Activated naive CD4-positive, alpha-beta T cell treated with anti-CD3 and anti-CD28 coated beads for 36 hours (primary cell): ENCODE measurements at regions of chr10 and their contacts with region 1.

Region 1: GRCh38 chr10:26860443-26861204 is at the start of gene ABI1:
- DNase-seq: peak; percentile 98
- H3K4me3 Mint-ChIP-seq: peak within 1 kb of the TSS; percentile 98
- H3K27ac Mint-ChIP-seq: peak within 1 kb of the TSS; percentile 99
- H3K4me1 Mint-ChIP-seq: peaks cover 30% of the 10 kb centered on the region
- H3K27me3 Mint-ChIP-seq: no peaks in the 10 kb centered on the region
- total RNA-seq, gene ABI1: 34.5 to 37.2 TPM

Region 2: DNA sequence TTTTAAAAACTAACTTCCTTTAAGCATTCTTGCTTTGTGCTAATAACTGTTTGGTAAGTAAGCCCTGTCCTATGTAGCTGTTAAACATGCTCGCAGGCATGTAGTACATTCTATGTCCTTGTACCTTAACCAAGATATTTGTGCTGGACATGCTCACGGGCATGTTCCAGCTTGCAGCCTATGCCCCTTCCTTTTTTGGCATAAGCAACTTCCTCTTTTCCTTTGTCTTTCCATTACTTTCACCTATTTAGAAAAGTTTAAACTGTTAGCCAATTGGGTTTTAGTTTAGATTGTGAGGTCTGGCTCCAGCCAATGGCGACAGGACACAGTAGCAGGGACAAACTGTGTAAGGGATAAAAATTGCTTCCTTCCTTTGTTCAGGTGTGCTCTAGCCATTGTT is 436.9 kb before region 1 on chr10:
- CTCF ChIA-PET with region 1: no interaction called
- intact Hi-C with region 1: no loop called
- DNase-seq: no peak
- H3K4me3 Mint-ChIP-seq: no peak overlapping the region
- H3K27ac Mint-ChIP-seq: no peak overlapping the region
- H3K4me1 Mint-ChIP-seq: no peaks in the 10 kb centered on the region
- H3K27me3 Mint-ChIP-seq: no peaks in the 10 kb centered on the region

Region 3: GRCh38 chr10:26437637-26438461 is 422.8 kb before region 1 on chr10 and contains the start of gene APBB1IP:
- CTCF ChIA-PET with region 1: no interaction called
- intact Hi-C with region 1: loop called (anchors 2 kb)
- DNase-seq: peak; percentile 58
- H3K4me3 Mint-ChIP-seq: peak within 1 kb of the TSS; percentile 81
- H3K27ac Mint-ChIP-seq: peak within 1 kb of the TSS; percentile 98
- H3K4me1 Mint-ChIP-seq: peaks cover 50% of the 10 kb centered on the region
- H3K27me3 Mint-ChIP-seq: no peaks in the 10 kb centered on the region
- total RNA-seq, gene APBB1IP: 29.4 to 30.9 TPM

Region 4: DNA sequence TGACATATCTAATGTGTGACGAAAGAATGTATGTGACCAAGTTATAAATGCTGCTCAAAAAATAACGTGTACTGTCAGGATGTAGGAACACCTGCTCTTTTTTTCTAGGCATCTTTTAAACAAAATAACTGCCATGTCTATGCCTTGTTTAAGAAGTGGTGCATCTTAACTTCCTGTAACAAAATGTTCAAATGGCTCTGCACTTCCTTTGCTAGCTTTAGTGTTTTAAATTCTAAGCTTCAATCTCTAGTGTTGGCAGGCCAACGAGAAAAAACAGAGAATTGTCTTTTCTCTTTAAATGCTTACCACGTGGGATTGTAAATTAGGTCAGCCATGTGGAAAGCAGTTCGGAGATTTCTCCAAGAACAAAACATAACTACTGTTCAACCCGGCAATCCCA is 177.7 kb before region 1 on chr10:
- CTCF ChIA-PET with region 1: no interaction called
- intact Hi-C with region 1: loop called (anchors 5 kb)
- DNase-seq: no peak
- H3K4me3 Mint-ChIP-seq: no peak overlapping the region
- H3K27ac Mint-ChIP-seq: peak overlapping the region; percentile 56
- H3K4me1 Mint-ChIP-seq: peaks cover 23% of the 10 kb centered on the region
- H3K27me3 Mint-ChIP-seq: no peaks in the 10 kb centered on the region

Region 5: DNA sequence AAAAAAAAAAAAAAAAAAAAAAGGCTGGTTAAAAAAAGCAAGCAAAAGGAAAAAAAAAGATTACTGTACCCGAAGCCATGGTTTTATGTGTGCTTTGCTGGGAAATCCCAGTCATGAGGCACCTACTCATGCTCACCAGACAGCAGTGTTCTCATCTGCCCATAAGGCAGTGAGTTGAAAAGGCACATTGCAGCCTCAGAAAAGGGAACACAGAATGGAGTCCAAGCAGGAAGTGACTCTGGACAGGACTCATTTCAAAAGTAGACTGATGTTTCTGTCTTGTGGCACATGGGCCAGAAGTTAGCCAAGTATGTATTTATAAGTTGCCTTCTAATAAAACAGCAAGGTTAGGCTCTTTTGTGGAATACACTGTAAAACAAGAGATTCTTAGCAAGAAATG is 122.9 kb before region 1 on chr10:
- CTCF ChIA-PET with region 1: interaction called, 3 read pairs
- intact Hi-C with region 1: loop called (anchors 1 kb)
- DNase-seq: peak; percentile 75
- H3K4me3 Mint-ChIP-seq: no peak overlapping the region
- H3K27ac Mint-ChIP-seq: peak overlapping the region; percentile 88
- H3K4me1 Mint-ChIP-seq: peaks cover 36% of the 10 kb centered on the region
- H3K27me3 Mint-ChIP-seq: no peaks in the 10 kb centered on the region

Region 6: DNA sequence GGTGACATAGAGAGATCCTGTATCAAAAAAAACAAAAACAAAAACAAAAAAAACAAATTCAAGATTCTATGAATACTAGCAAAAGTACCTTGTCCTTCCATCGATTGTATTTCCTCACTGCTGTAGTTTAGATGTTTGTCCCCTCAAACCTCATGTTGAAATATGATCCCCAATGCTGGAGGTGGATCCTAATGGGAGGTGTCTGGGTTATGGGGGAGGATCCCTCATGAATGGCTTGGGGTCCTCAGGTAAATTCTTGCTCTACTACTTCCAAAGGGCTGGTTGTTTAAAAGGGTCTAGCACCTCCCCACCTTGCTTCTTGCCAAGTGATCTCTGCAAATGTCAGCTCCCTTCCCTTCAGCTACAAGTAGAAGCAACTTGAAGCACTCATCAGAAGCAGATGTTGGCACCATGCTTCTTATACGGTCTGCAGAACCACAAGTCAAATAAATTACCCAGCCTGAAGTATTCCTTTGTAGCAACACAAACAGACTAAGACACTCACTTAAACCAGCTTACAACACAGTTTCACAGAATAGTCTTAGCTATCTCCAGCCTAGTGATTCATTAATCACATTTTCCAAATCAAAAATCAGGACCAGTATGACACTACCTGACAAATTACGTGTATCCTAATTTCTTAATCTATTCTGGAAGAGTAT is 20.5 kb before region 1 on chr10:
- CTCF ChIA-PET with region 1: interaction called, 3 read pairs
- intact Hi-C with region 1: loop called (anchors 1 kb)
- DNase-seq: no peak
- H3K4me3 Mint-ChIP-seq: no peak overlapping the region
- H3K27ac Mint-ChIP-seq: no peak overlapping the region
- H3K4me1 Mint-ChIP-seq: peaks cover 64% of the 10 kb centered on the region
- H3K27me3 Mint-ChIP-seq: no peaks in the 10 kb centered on the region

Region 7: GRCh38 chr10:26911811-26912461 is 51.3 kb after region 1 on chr10:
- CTCF ChIA-PET with region 1: no interaction called
- intact Hi-C with region 1: no loop called
- DNase-seq: no peak
- H3K4me3 Mint-ChIP-seq: no peak overlapping the region
- H3K27ac Mint-ChIP-seq: no peak overlapping the region
- H3K4me1 Mint-ChIP-seq: no peaks in the 10 kb centered on the region
- H3K27me3 Mint-ChIP-seq: no peaks in the 10 kb centered on the region

Region 8: GRCh38 chr10:27003432-27003831 is 142.8 kb after region 1 on chr10:
- CTCF ChIA-PET with region 1: no interaction called
- intact Hi-C with region 1: no loop called
- DNase-seq: no peak
- H3K4me3 Mint-ChIP-seq: no peak overlapping the region
- H3K27ac Mint-ChIP-seq: no peak overlapping the region
- H3K4me1 Mint-ChIP-seq: no peaks in the 10 kb centered on the region
- H3K27me3 Mint-ChIP-seq: no peaks in the 10 kb centered on the region

Region 9: DNA sequence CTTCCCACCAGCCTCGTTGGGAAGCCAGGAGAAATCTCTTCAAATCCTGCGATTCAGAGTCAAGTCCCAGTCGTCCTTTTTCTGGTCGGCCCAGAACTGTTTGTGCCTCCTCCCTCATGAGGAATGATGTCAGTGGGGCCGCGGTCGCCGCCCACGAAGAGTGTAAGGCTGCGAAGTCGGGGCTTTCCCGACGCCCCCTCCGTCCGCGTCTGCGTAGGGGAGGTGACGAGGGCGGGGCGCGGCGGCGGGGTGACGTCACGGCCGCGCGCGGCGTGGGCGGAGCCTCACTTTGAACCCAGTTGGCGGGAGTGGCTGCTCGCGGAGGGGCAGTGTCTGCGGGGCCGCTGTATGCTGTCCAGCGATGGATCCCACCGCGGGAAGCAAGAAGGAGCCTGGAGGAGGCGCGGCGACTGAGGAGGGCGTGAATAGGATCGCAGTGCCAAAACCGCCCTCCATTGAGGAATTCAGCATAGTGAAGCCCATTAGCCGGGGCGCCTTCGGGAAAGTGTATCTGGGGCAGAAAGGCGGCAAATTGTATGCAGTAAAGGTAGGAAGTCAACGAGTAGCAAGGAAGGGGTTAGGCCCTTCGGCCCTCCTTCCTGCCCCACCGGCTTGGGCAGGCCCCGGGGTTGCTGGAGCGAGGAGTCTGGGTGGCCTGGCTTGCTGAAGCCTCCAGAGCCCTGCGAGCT is 294.6 kb after region 1 on chr10 and contains the start of gene MASTL:
- CTCF ChIA-PET with region 1: no interaction called
- intact Hi-C with region 1: loop called (anchors 1 kb)
- DNase-seq: peak; percentile 95
- H3K4me3 Mint-ChIP-seq: peak within 1 kb of the TSS; percentile 94
- H3K27ac Mint-ChIP-seq: peak within 1 kb of the TSS; percentile 100
- H3K4me1 Mint-ChIP-seq: peaks cover 46% of the 10 kb centered on the region
- H3K27me3 Mint-ChIP-seq: no peaks in the 10 kb centered on the region
- total RNA-seq, gene MASTL: 50.7 to 51.3 TPM

Region 10: DNA sequence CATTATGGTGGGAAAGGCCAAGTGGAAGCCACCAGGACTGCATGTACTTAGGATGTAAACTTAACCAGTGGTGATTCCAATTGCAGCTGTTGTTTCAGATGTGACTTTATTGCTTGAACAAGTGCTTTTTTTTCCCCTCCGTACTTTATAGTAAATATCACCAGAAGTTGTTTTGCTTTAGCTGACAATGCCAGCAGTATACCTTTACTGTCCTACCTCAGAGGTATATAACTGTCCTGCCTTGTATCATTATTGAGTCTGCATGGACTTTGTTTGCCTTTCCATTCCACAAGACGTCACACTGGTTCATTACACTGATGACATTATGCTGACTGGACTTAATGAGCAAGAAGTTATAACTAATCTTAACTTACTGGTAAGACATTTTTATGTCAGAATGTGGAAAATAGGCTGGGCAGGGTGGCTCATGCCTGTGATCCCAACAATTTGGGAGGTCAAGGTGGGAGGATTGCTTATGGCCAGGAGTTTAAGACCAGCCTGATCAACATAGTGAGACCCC is 566.4 kb after region 1 on chr10:
- CTCF ChIA-PET with region 1: no interaction called
- intact Hi-C with region 1: no loop called
- DNase-seq: no peak
- H3K4me3 Mint-ChIP-seq: no peak overlapping the region
- H3K27ac Mint-ChIP-seq: no peak overlapping the region
- H3K4me1 Mint-ChIP-seq: no peaks in the 10 kb centered on the region
- H3K27me3 Mint-ChIP-seq: peaks cover 7% of the 10 kb centered on the region